A549 (cell line): ENCODE measurements at regions of chr3 and their contacts with region 1.

Region 1: DNA sequence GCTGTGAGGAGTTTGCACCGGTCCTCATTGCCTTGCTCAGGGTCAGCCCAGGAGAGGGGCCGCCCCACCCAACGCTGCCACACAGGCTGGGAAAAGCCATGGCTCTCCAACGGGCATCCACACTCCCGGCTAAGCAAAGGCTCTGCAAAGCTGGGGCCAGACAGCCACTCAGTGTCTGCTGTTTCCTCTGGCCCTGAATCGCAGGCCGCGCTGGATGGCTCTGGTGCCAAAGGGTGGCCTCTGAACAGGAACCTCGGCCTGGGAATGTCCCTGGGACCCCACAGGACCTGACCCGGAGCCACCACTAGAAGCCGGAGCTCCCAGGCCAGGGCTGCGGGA is 42.9 kb downstream of the RPN1 start:
- DNase-seq: no peak
- ATAC-seq: no peak
- H3K4me3 ChIP-seq: no peak overlapping the region
- H3K27ac ChIP-seq: no peak overlapping the region
- H3K4me1 ChIP-seq: no peaks in the 10 kb centered on the region
- CTCF ChIP-seq: no peak
- EP300 ChIP-seq: no peak
- POLR2A ChIP-seq: no peak
- RAD21 ChIP-seq: no peak

Region 2: GRCh38 chr3:128170805-128171516 is 436.7 kb before region 1 on chr3:
- CTCF ChIA-PET with region 1: interaction called, 10 read pairs
- POLR2A ChIA-PET with region 1: no interaction called
- DNase-seq: peak; percentile 67 to 78
- ATAC-seq: peak; percentile 97 to 99
- H3K4me3 ChIP-seq: no peak overlapping the region
- H3K27ac ChIP-seq: no peak overlapping the region
- H3K4me1 ChIP-seq: no peaks in the 10 kb centered on the region; the same call in 2 of the 3 replicates
- CTCF ChIP-seq: peak; percentile 83
- EP300 ChIP-seq: no peak
- POLR2A ChIP-seq: no peak
- RAD21 ChIP-seq: peak; percentile 80 to 83

Region 3: GRCh38 chr3:128426128-128426921 is 181.4 kb before region 1 on chr3:
- CTCF ChIA-PET with region 1: interaction called, 16 read pairs
- POLR2A ChIA-PET with region 1: no interaction called
- DNase-seq: peak; percentile 17 to 61
- ATAC-seq: peak; percentile 84 to 92
- H3K4me3 ChIP-seq: peak overlapping the region; percentile 30; the same call in 2 of the 3 replicates
- H3K27ac ChIP-seq: peak overlapping the region; percentile 54 to 83; a peak in 5 of 6 replicates
- H3K4me1 ChIP-seq: 0 out of 3 replicates have a peak, but pooled peaks cover 3% of the 10 kb centered on the region
- CTCF ChIP-seq: peak; percentile 79
- EP300 ChIP-seq: no peak
- POLR2A ChIP-seq: no peak
- RAD21 ChIP-seq: peak; percentile 54 to 88

Region 4: DNA sequence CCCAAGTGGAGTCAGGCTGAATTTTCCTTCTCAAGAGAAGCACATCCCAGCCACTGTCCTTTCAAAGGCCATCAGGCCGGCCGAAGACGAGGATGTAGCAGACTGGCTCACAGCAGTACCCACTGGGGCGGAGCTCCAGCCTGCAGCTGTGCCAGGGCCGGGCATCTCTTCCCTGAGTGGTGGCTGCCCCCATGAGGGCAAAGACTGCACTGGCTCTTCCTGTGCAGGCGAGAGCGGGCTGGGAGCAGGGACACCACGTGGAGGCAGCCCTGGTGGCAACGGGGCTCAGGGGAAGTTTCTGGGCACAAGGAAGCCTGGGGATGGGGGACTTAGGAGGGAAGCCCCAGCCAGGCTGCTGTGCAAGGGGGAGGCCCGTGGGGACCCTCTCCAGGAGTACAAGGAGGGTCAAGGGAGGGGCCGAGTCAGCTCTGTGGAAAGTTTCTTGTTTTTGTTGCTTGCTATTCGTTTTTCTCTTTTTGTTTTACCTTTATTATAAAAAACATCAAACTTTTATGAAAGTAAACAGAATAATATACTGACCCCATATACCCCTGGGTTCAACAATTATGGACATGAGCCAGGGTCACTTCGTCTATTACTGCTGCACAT is 23.2 kb before region 1 on chr3:
- CTCF ChIA-PET with region 1: interaction called, 16 read pairs
- POLR2A ChIA-PET with region 1: no interaction called
- DNase-seq: peak; percentile 74
- ATAC-seq: peak; percentile 100
- H3K4me3 ChIP-seq: no peak overlapping the region
- H3K27ac ChIP-seq: peak overlapping the region; percentile 37 to 76; a peak in 5 of 6 replicates
- H3K4me1 ChIP-seq: no peaks in the 10 kb centered on the region
- CTCF ChIP-seq: peak; percentile 62
- EP300 ChIP-seq: no peak
- POLR2A ChIP-seq: no peak
- RAD21 ChIP-seq: peak; percentile 87 to 90

Region 5: GRCh38 chr3:128617557-128618397 is 10.1 kb after region 1 on chr3:
- CTCF ChIA-PET with region 1: interaction called, 25 read pairs
- POLR2A ChIA-PET with region 1: no interaction called
- DNase-seq: peak; percentile 90 to 94
- ATAC-seq: peak; percentile 80 to 92
- H3K4me3 ChIP-seq: peak overlapping the region; percentile 57
- H3K27ac ChIP-seq: peak overlapping the region; percentile 77 to 93
- H3K4me1 ChIP-seq: peaks cover 15% of the 10 kb centered on the region
- CTCF ChIP-seq: peak; percentile 72
- EP300 ChIP-seq: no peak
- POLR2A ChIP-seq: no peak
- RAD21 ChIP-seq: peak; percentile 52 to 55